Common myeloid progenitor, CD34-positive (primary cell): ENCODE measurements at regions of chr14 and their contacts with region 1.

Region 1: GRCh38 chr14:76876076-76876475 is 49.9 kb downstream of the LRRC74A start:
- DNase-seq: peak; percentile 60 to 72 (median 65)
- H3K4me3 ChIP-seq: no peak overlapping the region
- H3K27ac ChIP-seq: no peak overlapping the region
- H3K4me1 ChIP-seq: peaks cover 0 to 10% (median 2%) of the 10 kb centered on the region in 4 experiments
- H3K27me3 ChIP-seq: no peaks in the 10 kb centered on the region

Region 2: GRCh38 chr14:76806446-76806845 is 69.6 kb before region 1 on chr14:
- CTCF ChIA-PET with region 1: no interaction called
- POLR2A ChIA-PET with region 1: no interaction called
- DNase-seq: no peak
- H3K4me3 ChIP-seq: no peak overlapping the region
- H3K27ac ChIP-seq: no peak overlapping the region
- H3K4me1 ChIP-seq: peaks cover 7 to 25% (median 10%) of the 10 kb centered on the region in 4 experiments
- H3K27me3 ChIP-seq: no peaks in the 10 kb centered on the region

Region 3: DNA sequence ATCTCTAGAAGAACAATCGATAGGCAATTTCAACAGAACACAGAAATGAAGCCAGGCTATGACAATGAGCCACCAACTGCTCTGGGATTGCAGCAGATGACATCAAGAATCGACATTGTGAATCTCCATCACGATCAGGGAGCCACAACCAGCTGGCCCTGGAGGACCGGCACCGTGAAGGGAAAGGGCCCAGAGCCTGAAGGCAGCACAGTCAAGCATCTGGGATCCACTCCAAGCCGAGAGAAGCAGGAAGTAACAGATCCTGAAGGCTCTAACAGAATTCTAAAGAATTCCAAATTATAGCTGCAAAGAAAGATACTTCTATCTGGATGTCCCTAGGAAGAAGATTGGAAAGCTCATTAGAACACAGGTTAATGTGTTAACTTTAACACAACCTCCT is 11.1 kb after region 1 on chr14:
- CTCF ChIA-PET with region 1: interaction called, 83 read pairs
- POLR2A ChIA-PET with region 1: interaction called, 3 read pairs
- DNase-seq: no peak
- H3K4me3 ChIP-seq: no peak overlapping the region
- H3K27ac ChIP-seq: no peak overlapping the region
- H3K4me1 ChIP-seq: peaks cover 0 to 20% (median 15%) of the 10 kb centered on the region in 4 experiments
- H3K27me3 ChIP-seq: no peaks in the 10 kb centered on the region

Region 4: DNA sequence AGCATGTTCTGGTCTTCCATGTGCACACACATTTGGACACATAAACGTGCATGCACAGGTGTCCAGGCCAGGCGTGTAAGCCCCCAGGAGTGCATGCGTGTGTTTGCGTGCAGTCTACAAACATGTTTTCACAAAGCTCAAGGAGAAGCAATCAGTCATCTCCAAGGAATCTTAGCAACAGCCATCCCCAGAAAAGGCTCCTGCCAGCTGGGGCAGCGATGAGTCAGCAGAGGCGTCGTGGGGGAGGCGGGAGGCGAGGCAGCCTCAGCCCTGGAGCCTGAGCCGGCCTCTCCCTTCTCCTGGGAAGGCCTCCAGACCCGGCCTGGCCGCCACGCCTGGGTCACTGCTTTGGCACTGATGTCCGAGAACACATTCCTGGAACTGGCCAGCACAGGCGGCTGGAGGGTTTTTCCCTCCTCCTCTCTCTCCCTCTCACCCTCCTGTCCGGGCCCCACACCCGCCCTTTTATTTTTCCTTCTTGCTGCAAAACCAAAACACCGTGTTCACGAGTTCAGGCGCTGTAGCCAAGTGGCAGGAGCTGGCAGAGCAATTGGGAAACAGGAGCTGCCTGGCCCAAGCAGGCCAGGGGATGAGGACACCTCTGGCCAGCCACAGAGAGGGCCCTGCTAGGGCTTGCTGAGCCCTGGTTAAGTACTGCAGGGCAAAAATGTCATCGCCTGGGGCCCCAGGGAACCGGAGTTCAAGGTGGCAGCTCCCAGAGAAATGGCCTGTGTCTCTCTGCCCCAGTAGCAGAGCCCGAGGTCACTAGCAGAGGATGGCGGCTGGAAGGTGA is 42.9 kb after region 1 on chr14:
- CTCF ChIA-PET with region 1: interaction called, 201 read pairs
- POLR2A ChIA-PET with region 1: no interaction called
- DNase-seq: peak in 2 of 3 donors; percentile 82 to 85
- H3K4me3 ChIP-seq: peak overlapping the region in 2 of 7 experiments; percentile 8 to 37
- H3K27ac ChIP-seq: peak overlapping the region; percentile 11 to 50
- H3K4me1 ChIP-seq: peaks cover 8 to 94% (median 81%) of the 10 kb centered on the region in 4 experiments
- H3K27me3 ChIP-seq: no peaks in the 10 kb centered on the region

Region 5: DNA sequence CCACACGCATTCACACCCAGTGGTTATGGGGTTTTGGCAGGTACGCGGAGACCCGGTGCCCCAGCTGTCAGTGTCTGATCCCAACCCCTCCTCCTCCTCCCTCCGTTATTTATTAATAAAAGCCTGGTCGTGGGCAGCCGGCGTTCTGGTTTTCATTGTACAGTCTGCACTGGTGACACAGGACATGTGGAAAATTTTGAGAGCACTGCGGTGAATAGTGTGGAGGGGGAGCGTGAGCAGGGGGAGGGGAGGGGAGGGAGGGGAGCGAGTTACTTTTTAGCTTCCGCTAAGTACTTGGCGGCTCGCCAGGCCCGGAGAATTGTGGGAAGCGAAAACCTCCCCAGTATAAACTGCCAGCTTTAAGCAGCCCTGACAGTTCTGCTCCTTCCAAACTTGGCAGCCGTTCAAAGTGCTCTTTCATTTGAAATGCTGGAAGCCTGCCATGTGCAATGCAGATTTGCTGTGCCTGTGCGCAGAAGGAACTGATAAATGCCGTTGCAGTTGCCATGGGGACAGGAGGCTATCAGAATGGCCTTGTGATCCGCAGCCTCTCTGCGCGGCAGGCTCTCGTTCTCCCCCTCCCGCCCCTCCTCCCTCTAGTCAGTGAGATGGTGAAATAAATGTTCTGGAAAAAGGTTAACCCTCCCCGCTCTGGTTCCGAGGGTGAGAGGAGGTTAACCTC is 164.1 kb after region 1 on chr14:
- CTCF ChIA-PET with region 1: interaction called, 42 read pairs
- POLR2A ChIA-PET with region 1: no interaction called
- DNase-seq: peak; percentile 99 to 100 (median 100)
- H3K4me3 ChIP-seq: peak overlapping the region in 6 of 7 experiments; percentile 26 to 70 (median 55)
- H3K27ac ChIP-seq: peak overlapping the region; percentile 91 to 95
- H3K4me1 ChIP-seq: peaks cover 43 to 97% (median 78%) of the 10 kb centered on the region in 4 experiments
- H3K27me3 ChIP-seq: no peaks in the 10 kb centered on the region

Region 6: DNA sequence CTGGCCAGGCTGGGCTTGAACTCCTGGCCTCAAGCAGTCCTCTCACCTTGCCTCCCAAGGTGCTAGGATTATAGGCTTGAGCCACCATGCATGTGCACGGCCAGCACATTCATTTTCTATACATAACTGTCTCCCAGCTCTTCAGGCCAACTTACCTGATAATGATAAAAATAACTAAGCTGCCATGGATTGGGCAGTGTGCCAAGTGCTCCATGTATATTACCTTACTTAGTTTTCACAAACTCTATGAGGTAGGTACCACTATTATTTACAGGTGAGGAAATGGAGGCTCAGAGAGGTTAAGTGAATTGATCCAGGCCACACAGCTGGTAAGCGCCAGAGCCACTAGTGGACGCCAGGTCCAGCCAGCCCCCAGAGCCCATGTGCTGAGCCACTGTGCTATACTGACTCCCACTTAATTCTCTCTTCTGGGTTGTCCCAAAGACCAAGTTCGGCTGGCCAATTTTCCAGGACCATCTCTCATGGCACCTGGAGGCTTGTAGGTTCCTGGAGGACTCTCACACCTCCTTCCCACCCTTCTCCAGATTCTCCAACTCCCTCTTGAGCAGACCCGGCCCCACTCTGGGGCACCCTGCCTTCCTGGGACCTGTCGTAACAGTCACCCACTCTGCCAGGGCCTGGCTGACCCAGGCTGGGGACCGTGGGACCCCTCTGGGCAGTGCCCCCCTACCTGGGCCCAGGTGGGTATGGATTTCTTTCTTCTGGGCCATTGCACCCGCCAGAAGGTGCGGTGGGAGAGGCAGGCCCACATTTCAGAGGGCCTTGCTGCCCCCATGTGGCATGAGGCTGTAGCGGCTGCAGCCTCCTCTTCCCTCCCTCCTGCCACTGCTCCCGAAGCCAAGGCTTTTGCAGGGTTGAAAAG is 191.8 kb after region 1 on chr14:
- CTCF ChIA-PET with region 1: interaction called, 791 read pairs
- POLR2A ChIA-PET with region 1: interaction called, 3 read pairs
- DNase-seq: peak; percentile 48 to 66 (median 63)
- H3K4me3 ChIP-seq: no peak overlapping the region
- H3K27ac ChIP-seq: no peak overlapping the region
- H3K4me1 ChIP-seq: peaks cover 0 to 23% (median 9%) of the 10 kb centered on the region in 4 experiments
- H3K27me3 ChIP-seq: no peaks in the 10 kb centered on the region

Region 7: DNA sequence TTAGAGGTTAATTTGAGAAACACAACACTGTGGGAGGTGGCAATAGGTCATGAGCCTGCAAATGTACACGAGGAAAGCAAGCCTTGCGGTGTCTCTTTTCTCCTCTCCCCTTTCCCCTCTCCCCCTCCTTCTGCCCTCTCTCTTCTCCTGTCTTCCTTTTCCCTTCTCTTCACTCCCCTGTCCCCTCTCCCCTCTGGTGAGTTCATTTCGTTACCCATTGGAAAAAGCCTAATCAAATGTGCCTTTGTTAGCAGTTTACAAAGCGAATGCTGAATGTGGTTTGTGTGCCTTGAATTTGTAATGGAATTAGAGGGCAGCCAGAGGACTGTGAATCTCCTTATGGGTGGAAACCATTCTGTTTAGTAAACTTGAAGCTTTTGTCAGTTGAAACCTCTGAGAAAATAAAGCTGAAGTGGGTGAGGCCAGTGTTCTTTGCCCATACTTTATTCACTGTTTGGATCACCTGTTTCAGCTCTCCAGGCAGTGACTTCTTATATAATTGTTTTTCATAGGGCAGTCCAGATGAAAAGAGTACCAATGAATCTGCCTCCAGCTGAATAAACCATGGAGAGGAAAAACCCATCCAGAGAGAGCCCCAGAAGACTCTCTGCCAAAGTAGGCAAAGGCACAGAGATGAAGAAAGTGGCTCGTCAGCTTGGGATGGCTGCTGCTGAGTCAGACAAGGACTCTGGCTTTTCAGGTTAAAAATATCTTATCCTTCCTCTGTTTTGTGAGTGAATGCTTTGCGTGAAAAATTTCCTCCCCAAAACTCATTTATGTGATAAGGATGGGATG is 229.3 kb after region 1 on chr14:
- CTCF ChIA-PET with region 1: interaction called, 11 read pairs
- POLR2A ChIA-PET with region 1: no interaction called
- DNase-seq: no peak
- H3K4me3 ChIP-seq: no peak overlapping the region
- H3K27ac ChIP-seq: no peak overlapping the region
- H3K4me1 ChIP-seq: peaks cover 0 to 4% (median 0%) of the 10 kb centered on the region in 4 experiments
- H3K27me3 ChIP-seq: no peaks in the 10 kb centered on the region

Region 8: DNA sequence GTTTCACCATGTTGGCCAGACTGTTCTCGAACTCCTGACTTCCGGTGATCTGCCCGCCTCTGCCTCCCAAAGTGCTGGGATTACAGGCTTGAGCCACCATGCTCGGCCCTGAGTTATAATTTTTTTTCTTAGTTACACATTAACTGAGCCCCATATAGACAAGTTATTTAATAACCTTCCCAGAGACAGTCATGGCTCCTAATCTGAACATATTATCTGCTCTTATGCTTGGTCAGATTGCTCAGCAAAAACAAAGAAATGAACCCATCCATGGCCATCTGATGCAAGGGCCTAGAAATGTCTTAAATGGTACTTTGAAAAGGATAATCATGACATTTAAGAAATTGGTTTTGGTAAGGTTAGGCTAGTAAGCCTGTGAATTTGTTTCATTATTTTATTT is 514.1 kb after region 1 on chr14:
- CTCF ChIA-PET with region 1: no interaction called
- POLR2A ChIA-PET with region 1: no interaction called
- DNase-seq: no peak
- H3K4me3 ChIP-seq: no peak overlapping the region
- H3K27ac ChIP-seq: no peak overlapping the region
- H3K4me1 ChIP-seq: no peaks in the 10 kb centered on the region
- H3K27me3 ChIP-seq: no peaks in the 10 kb centered on the region